ENCODE measurements at regions of chr2 and their contacts with region 1.

Region 1: DNA sequence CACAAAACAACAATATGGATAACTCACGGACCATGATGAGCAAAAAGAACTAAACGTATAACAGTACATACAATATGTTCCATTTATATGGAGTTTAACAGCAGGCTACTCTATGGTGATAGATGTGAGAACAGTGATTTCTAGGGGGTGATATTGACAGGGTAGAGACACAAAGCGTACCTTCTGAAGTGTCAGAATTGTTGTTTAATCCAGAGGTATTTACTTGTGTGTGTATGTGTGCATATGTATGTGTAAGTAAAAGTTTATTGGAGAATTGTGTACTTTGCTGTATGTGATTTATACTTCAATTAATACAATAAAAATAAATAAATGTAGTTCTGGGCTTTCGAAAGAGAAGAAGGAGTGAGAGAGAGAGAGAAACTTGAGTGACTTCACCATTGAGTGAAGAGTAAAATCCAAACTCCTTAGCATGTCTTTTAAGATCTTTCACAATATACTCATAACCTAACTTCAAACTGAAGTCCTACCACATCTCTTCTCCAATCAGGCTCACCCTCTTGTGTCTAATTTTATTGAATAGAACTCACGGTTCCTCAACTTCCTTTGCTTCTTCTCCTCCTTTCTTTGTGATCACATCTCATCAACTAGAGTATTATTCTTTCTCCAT is 126.0 kb upstream of the KLF7 start:
- H3K4me3 ChIP-seq: no peak overlapping the region
- H3K27ac ChIP-seq: no peak overlapping the region
- H3K4me1 ChIP-seq: no peaks in the 10 kb centered on the region
- CTCF ChIP-seq: no peak

Region 2: DNA sequence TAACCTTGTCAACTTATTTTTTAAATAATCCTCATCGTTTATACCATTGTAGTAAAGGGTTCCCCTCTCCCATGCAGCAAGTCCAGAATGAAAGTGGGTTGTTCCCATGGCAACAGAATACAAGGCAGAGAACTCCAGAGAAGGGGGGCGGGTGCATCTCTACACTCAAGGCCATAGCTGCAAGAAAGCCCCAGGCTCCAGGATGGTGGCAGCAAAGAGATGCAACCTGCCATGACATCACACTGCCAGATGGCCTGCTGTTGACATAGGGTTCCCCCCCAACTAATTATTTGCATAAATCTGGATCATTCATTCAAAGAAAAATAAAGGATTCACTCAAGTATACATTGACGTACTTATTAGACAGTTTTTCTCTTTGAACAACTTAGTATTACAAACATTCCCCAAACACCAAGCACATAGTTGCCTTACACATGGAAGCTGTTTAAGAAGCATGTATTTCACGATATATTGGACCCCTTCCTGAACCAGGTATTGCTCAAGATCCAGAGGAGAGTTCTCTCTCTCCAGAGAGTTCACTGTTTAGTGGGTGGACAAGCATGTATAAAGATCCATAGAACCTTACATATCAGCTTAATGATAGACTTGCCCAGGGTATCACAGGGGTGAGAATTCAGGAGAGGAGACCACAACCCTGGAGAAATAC is 38.6 kb before region 1 on chr2:
- CTCF ChIA-PET with region 1: no interaction called
- POLR2A ChIA-PET with region 1: interaction called, 11 read pairs
- H3K4me3 ChIP-seq: no peak overlapping the region
- H3K27ac ChIP-seq: no peak overlapping the region
- H3K4me1 ChIP-seq: no peaks in the 10 kb centered on the region
- CTCF ChIP-seq: no peak

Region 3: DNA sequence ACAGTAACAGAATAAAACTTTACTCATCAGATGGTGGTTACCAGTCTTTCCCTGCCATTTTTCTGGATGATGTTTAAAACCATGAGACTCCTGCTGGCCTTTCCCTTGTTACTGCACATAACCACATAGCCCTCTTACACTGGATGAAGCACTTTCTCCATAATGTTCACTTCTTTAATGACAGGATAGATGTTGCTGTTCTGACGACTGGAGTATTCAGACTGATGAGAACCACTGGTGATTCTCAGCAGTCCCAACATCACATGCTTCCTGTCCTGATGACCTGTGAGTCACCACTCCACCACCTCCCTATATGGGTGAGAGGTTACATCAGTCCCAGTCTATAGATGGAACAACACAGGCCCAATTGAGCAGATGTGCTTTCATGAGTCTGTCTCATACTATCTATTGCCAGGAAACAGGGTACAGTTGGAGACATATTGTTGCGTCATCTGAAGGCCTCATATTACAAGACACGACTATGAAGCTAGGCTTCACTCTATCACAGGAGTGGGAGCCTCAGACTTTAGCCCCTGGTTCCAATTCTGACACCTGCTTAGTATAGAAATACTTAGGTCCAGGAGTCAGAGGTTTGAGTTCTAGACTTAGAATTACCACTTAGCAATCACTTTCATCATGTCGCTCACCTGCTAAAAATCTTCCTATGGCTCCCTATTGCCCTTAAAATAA is 19.7 kb after region 1 on chr2:
- CTCF ChIA-PET with region 1: no interaction called
- POLR2A ChIA-PET with region 1: no interaction called
- H3K4me3 ChIP-seq: no peak overlapping the region
- H3K27ac ChIP-seq: no peak overlapping the region
- H3K4me1 ChIP-seq: no peaks in the 10 kb centered on the region
- CTCF ChIP-seq: no peak